Endothelial cell of umbilical vein (primary cell): ENCODE measurements at regions of chr14 and their contacts with region 1.

Region 1: GRCh38 chr14:68788996-68789820 is 3.7 kb downstream of the ZFP36L1 start:
- DNase-seq: peak; percentile 79
- H3K4me3 ChIP-seq: peak overlapping the region; percentile 96
- H3K27ac ChIP-seq: peak overlapping the region; percentile 21
- H3K4me1 ChIP-seq: peaks cover 43% of the 10 kb centered on the region
- H3K27me3 ChIP-seq: no peaks in the 10 kb centered on the region
- CTCF ChIP-seq: peak; percentile 71 to 82
- POLR2A ChIP-seq: peak; percentile 14

Region 2: GRCh38 chr14:67943947-67944346 is 845.3 kb before region 1 on chr14:
- CTCF ChIA-PET with region 1: interaction called, 8 read pairs
- POLR2A ChIA-PET with region 1: interaction called, 3 read pairs
- dilution Hi-C with region 1: no loop called
- intact Hi-C with region 1: loop called (anchors 1 kb)
- DNase-seq: peak; percentile 85
- H3K4me3 ChIP-seq: no peak overlapping the region
- H3K27ac ChIP-seq: no peak overlapping the region
- H3K4me1 ChIP-seq: peaks cover 6% of the 10 kb centered on the region
- H3K27me3 ChIP-seq: no peaks in the 10 kb centered on the region
- CTCF ChIP-seq: peak; percentile 37 to 61
- POLR2A ChIP-seq: no peak

Region 3: GRCh38 chr14:68495101-68496039 is 293.8 kb before region 1 on chr14:
- CTCF ChIA-PET with region 1: interaction called, 5 read pairs
- POLR2A ChIA-PET with region 1: interaction called, 6 read pairs
- dilution Hi-C with region 1: no loop called
- intact Hi-C with region 1: loop called (anchors 1 kb)
- DNase-seq: peak; percentile 81
- H3K4me3 ChIP-seq: no peak overlapping the region
- H3K27ac ChIP-seq: peak overlapping the region; percentile 0
- H3K4me1 ChIP-seq: peaks cover 23% of the 10 kb centered on the region
- H3K27me3 ChIP-seq: no peaks in the 10 kb centered on the region
- CTCF ChIP-seq: no peak
- POLR2A ChIP-seq: no peak

Region 4: DNA sequence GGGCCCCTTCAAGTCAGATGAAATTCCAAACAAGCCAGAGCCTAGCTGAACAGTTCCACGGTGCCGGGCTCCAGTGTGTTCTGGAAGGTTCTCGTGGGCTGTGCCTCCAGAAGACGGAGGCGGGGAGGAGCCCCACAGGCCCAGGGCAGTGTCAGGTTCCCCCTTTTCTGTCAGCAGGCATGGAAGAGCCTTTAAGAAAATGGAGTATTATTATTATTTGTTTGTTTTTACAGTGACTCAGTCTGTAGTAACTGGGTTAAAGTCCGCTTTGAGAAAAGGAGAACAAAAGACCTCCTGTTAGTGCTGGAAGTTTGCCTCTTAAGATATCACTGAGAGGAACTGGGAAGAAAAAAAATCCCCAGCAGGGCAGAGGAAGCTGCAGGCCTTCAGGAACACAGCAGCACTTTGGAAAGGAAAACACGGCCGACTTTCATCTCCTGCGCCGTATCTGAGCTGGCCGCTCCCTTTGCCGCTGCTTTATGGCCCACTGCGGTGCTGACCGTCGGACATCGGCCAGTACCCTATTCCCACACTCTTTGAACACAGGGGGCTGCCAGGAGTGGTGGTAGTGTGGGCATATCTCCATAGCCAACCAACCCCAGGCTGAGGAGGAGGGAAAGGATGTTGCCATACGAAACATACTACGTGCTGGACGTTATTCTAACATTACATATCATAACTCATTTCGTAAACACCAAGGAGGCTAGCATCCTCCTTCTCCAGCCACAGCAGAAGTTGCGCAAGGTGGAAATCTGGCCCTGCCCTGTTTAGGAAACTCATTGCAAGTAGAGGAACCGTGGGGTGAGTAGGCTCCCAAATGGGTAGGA is 190.4 kb before region 1 on chr14:
- CTCF ChIA-PET with region 1: interaction called, 5 read pairs
- POLR2A ChIA-PET with region 1: interaction called, 9 read pairs
- dilution Hi-C with region 1: no loop called
- intact Hi-C with region 1: loop called (anchors 1 kb)
- DNase-seq: peak; percentile 97
- H3K4me3 ChIP-seq: no peak overlapping the region
- H3K27ac ChIP-seq: peak overlapping the region; percentile 82
- H3K4me1 ChIP-seq: peaks cover 24% of the 10 kb centered on the region
- H3K27me3 ChIP-seq: no peaks in the 10 kb centered on the region
- CTCF ChIP-seq: no peak
- POLR2A ChIP-seq: peak; percentile 55

Region 5: GRCh38 chr14:68762953-68763764 is 26.0 kb before region 1 on chr14:
- CTCF ChIA-PET with region 1: interaction called, 18 read pairs
- POLR2A ChIA-PET with region 1: interaction called, 16 read pairs
- dilution Hi-C with region 1: no loop called
- intact Hi-C with region 1: no loop called
- DNase-seq: peak; percentile 92
- H3K4me3 ChIP-seq: no peak overlapping the region
- H3K27ac ChIP-seq: no peak overlapping the region
- H3K4me1 ChIP-seq: peaks cover 28% of the 10 kb centered on the region
- H3K27me3 ChIP-seq: no peaks in the 10 kb centered on the region
- CTCF ChIP-seq: no peak
- POLR2A ChIP-seq: peak; percentile 35

Region 6: DNA sequence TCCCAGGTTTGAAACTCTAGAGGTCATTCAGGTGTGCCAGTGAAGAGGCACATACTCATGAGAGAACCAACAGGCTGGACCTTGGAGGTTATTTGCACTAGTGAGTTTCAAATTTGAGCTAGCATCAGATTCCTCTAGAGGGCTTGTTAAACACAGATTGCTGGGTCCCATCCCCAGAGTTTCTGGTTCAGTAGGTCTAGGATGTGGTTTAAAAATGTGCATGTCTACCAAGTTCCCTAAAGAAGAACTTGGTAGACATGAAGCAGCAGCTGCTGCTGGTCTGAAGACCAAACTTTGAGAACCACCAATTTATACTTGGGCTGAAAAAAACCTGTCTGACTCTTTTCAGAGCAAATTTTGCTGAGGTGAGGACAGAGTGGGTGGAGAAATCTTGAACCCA is 883.9 kb after region 1 on chr14:
- CTCF ChIA-PET with region 1: no interaction called
- POLR2A ChIA-PET with region 1: no interaction called
- dilution Hi-C with region 1: no loop called
- intact Hi-C with region 1: no loop called
- DNase-seq: no peak
- H3K4me3 ChIP-seq: no peak overlapping the region
- H3K27ac ChIP-seq: no peak overlapping the region
- H3K4me1 ChIP-seq: no peaks in the 10 kb centered on the region
- H3K27me3 ChIP-seq: no peaks in the 10 kb centered on the region
- CTCF ChIP-seq: no peak
- POLR2A ChIP-seq: no peak